Mammary epithelial cell (primary cell): ENCODE measurements at regions of chr15 and their contacts with region 1.

Region 1: DNA sequence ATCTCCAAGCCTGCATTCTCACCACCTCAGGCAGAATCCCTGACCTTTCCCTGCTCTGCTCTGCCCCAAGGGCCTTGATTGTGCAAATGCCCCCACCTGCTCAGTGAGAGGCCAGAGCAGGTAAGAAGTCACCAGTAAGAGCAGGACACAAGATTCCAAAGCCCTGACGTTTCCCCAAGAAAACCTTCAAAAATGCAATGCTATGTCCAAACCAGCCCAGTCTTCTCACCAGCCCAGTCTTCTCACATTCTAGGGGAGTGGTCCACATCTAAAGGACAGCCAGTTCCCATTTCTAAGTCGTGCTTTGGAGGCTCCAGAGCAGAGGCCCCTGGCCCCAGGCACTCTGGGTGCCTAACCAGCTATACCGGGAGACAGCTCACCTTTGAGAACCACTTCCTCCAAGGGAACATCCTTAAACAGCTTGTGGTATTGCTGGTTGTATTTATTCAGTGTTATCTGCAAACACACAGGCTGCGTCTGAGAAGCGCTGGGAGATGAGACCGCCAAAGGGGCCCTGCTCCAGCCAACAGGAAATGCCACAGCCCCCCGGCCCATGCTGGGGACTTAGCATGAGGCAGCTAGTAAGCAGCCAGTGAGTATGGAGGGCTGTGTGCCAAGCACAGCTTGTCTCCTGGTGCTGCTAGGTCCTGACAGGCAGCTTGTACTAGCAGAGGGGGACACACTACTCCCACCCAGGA is 29.3 kb downstream of the GRAMD2A start:
- DNase-seq: peak; percentile 87
- H3K4me3 ChIP-seq: peak overlapping the region in 1 of 3 experiments; percentile 11
- H3K27ac ChIP-seq: peak overlapping the region; percentile 64
- H3K4me1 ChIP-seq: peaks cover 43% of the 10 kb centered on the region
- H3K27me3 ChIP-seq: no peaks in the 10 kb centered on the region
- CTCF ChIP-seq: no peak

Region 2: DNA sequence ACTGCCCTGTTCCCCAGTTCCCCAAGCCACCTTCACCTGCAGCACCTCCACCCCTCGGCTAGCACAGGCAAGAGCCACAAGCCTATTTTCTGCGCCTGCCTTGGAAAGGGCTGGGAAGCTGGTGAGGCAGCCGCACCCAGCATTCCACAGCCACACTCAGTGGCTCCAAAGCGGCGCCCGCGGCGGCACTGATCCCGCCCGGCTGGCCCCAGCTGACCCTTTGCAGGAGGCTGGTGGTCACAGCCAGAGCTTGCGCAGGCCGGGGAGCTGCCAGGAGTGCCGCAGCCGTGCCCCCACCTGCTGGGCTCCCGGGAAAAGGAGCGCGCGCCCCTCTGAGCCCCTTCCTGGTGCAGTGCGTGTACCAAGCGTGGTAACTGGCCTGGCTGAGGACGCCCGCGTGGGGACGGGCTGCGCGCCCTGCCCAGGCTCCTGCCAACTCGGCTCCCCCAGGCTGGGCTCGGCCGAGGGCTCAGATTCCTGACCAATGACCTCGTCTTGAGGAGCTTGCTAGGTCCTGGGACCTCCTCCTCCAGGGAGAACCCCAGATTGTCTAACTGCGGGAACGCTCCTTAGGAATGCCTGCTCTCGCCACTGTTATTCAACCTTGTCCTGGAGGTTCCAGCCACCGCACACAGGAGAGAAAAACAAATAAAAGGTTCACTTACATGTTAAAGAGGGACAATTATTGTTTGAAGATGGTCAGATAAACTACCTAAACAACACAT is 16.1 kb after region 1 on chr15:
- CTCF ChIA-PET with region 1: no interaction called
- dilution Hi-C with region 1: no loop called
- in situ Hi-C with region 1: no loop called
- intact Hi-C with region 1: loop called (anchors 2 kb)
- DNase-seq: no peak
- H3K4me3 ChIP-seq: peak overlapping the region; percentile 4 to 34 (median 29)
- H3K27ac ChIP-seq: no peak overlapping the region
- H3K4me1 ChIP-seq: peaks cover 24% of the 10 kb centered on the region
- H3K27me3 ChIP-seq: no peaks in the 10 kb centered on the region
- CTCF ChIP-seq: no peak

Region 3: GRCh38 chr15:72445426-72445825 is 277.2 kb after region 1 on chr15:
- CTCF ChIA-PET with region 1: no interaction called
- dilution Hi-C with region 1: no loop called
- in situ Hi-C with region 1: no loop called
- intact Hi-C with region 1: no loop called
- DNase-seq: no peak
- H3K4me3 ChIP-seq: no peak overlapping the region
- H3K27ac ChIP-seq: no peak overlapping the region
- H3K4me1 ChIP-seq: no peaks in the 10 kb centered on the region
- H3K27me3 ChIP-seq: no peaks in the 10 kb centered on the region
- CTCF ChIP-seq: no peak